Mammary epithelial cell (primary cell): ENCODE measurements at regions of chr4 and their contacts with region 1.

Region 1: GRCh38 chr4:72531768-72532290 is 37.2 kb downstream of the ADAMTS3 start:
- DNase-seq: no peak
- H3K4me3 ChIP-seq: no peak overlapping the region
- H3K27ac ChIP-seq: no peak overlapping the region
- H3K4me1 ChIP-seq: no peaks in the 10 kb centered on the region
- H3K27me3 ChIP-seq: peaks cover 2% of the 10 kb centered on the region
- CTCF ChIP-seq: no peak

Region 2: GRCh38 chr4:72286185-72286584 is 245.6 kb before region 1 on chr4:
- CTCF ChIA-PET with region 1: no interaction called
- dilution Hi-C with region 1: no loop called
- in situ Hi-C with region 1: no loop called
- intact Hi-C with region 1: no loop called
- DNase-seq: peak; percentile 11
- H3K4me3 ChIP-seq: no peak overlapping the region
- H3K27ac ChIP-seq: no peak overlapping the region
- H3K4me1 ChIP-seq: no peaks in the 10 kb centered on the region
- H3K27me3 ChIP-seq: no peaks in the 10 kb centered on the region
- CTCF ChIP-seq: peak; percentile 15 to 37

Region 3: DNA sequence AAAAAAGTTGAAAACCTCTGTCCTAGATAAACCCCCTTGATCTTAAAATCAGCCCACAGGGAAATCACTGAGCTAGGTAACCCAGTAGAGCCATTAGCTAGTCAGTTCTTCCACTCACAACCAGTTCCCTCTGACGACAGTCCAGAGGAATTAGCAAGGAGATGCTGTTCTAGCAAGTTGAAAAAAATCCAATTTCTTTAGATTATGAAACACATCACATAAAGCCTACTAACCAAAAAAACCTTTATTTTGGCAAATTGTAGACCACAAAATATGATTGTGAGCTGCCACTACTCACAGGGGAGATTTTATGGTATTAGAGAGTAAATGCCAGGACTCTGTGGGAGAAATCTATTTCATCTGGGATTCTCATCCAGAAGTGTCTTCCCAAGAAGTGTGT is 14.6 kb after region 1 on chr4:
- CTCF ChIA-PET with region 1: no interaction called
- dilution Hi-C with region 1: no loop called
- in situ Hi-C with region 1: no loop called
- intact Hi-C with region 1: no loop called
- DNase-seq: no peak
- H3K4me3 ChIP-seq: no peak overlapping the region
- H3K27ac ChIP-seq: no peak overlapping the region
- H3K4me1 ChIP-seq: no peaks in the 10 kb centered on the region
- H3K27me3 ChIP-seq: no peaks in the 10 kb centered on the region
- CTCF ChIP-seq: no peak

Region 4: DNA sequence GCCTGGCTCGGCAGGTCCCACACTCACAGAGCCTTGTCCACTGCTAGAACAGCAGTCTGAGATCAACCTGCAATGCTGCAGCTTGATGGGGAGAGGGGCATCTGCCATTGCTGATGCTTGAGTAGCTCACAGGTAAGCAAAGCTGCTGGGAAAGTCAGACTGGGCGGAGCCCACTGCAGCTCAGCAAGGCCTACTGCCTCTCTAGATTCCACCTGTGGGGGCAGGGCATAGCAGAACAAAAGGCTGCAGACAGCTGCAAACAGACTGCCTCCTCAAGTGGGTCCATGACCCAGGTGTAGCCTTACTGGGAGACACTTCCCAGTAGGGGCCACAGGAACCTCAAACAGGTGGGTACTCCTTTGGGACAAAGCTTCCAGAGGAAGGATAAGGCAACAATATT is 147.8 kb after region 1 on chr4:
- CTCF ChIA-PET with region 1: no interaction called
- dilution Hi-C with region 1: no loop called
- in situ Hi-C with region 1: no loop called
- intact Hi-C with region 1: loop called (anchors 10 kb)
- DNase-seq: no peak
- H3K4me3 ChIP-seq: no peak overlapping the region
- H3K27ac ChIP-seq: no peak overlapping the region
- H3K4me1 ChIP-seq: no peaks in the 10 kb centered on the region
- H3K27me3 ChIP-seq: no peaks in the 10 kb centered on the region
- CTCF ChIP-seq: no peak

Region 5: DNA sequence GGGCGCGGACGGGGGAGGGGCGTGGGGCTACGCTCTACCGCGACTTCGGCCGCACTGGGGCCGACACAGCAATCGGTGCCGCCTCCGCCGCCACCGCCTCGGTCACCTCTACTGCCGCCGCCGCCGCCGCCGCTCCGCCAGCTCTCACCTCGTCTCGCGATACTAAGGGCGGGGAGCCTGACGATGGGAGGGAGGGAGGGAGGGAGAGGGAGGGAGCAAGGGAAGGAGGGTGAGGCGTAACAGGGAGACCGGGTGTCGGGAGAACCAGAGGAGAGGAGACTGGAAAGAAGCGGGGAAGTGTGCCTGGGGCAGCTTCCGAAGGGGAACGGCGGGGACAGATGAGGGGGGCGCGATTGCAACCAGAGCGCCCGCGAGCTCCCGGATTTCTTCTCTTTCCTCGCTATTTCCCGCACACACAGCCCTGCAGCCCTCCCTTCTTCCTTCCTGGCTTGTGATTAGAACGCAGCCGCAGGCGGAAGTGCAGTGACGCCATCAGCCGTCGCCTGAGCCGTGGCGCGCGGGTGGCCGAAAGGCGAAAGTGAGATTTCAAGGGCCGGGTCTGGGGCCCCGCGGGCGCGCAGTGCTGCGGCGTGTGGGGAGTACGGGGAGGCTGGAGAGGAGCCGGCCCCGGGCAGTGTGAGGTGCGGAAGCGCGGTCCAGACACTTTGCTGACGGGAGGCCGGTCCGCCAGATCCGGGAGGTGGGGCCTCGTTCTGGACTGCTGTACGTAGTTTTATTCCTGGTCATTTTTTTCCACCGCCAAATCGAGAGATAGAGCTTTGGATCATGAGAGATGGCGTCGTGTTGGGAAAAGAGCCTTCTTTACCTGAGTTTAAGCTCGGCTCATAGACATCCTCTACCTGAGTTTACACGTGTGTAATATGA is 727.1 kb after region 1 on chr4 and contains the start of gene ANKRD17:
- CTCF ChIA-PET with region 1: no interaction called
- dilution Hi-C with region 1: no loop called
- in situ Hi-C with region 1: no loop called
- intact Hi-C with region 1: no loop called
- DNase-seq: peak; percentile 94
- H3K4me3 ChIP-seq: peak within 1 kb of the TSS; percentile 70 to 97 (median 96)
- H3K27ac ChIP-seq: peak within 1 kb of the TSS; percentile 97
- H3K4me1 ChIP-seq: peaks cover 12% of the 10 kb centered on the region
- H3K27me3 ChIP-seq: no peaks in the 10 kb centered on the region
- CTCF ChIP-seq: peak in 1 of 2 donors; percentile 22
- total RNA-seq, gene ANKRD17: 66.2 to 70.6 TPM